Activated T-helper 1 cell treated with anti-CD3 and anti-CD28 coated beads, Interleukin-12 subunit alpha, Interleukin-12 subunit beta, Interleukin-2, Interleukin-4 antibody, amounts not matched to agents 30 ng/mL and 10 ng/mL and 1 ng/mL, durations not matched to agents 14 hours and 24 hours and 36 hours (primary cell): ENCODE measurements at regions of chr11 and their contacts with region 1.

Region 1: GRCh38 chr11:62383822-62384221 is 35.0 kb upstream of the SCGB1A1 start:
- DNase-seq: no peak
- H3K4me3 Mint-ChIP-seq: no peak overlapping the region
- H3K27ac Mint-ChIP-seq: no peak overlapping the region
- H3K4me1 Mint-ChIP-seq: peaks cover 19% of the 10 kb centered on the region
- H3K27me3 Mint-ChIP-seq: peaks cover 10% of the 10 kb centered on the region

Region 2: GRCh38 chr11:61695917-61696316 is 687.9 kb before region 1 on chr11:
- intact Hi-C with region 1: no loop called
- DNase-seq: peak; percentile 90
- H3K4me3 Mint-ChIP-seq: peak overlapping the region; percentile 70
- H3K27ac Mint-ChIP-seq: peak overlapping the region; percentile 82
- H3K4me1 Mint-ChIP-seq: peaks cover 25% of the 10 kb centered on the region
- H3K27me3 Mint-ChIP-seq: peaks cover 3% of the 10 kb centered on the region

Region 3: DNA sequence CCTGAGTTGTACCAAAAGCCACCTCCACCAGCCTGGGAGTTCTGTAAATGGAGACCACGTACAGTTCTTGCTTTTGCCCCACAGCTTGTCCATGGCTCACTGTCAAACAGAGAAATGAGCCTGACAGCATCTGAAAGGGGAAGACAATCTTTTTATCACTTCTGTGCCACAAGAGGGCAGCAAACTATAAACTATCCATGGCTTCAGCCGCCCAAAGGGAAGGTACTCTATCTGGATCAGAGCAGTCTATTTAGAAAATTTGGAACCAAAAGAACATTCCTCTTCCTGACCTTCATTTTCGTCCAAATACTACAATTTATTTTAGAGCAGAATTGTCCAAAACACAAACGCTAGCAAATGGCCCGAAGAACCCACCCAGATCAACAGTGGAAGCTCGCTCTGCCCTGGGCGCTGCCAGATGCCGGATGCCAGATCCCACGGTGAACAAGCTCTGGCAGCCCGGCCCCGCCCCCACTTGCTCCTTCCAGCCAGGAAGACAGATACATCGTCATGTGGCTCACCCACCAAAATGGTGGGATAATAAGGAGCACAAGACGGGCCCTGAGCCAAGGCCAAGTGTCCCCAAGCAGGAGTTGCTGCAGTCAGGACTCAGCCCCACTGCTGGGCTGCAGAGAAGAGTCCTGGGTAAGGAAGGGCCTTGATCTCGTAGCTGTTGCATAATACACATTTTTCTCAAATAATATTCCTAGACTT is 11.2 kb after region 1 on chr11:
- intact Hi-C with region 1: loop called (anchors 1 kb)
- DNase-seq: peak; percentile 48
- H3K4me3 Mint-ChIP-seq: no peak overlapping the region
- H3K27ac Mint-ChIP-seq: no peak overlapping the region
- H3K4me1 Mint-ChIP-seq: peaks cover 8% of the 10 kb centered on the region
- H3K27me3 Mint-ChIP-seq: peaks cover 2% of the 10 kb centered on the region

Region 4: DNA sequence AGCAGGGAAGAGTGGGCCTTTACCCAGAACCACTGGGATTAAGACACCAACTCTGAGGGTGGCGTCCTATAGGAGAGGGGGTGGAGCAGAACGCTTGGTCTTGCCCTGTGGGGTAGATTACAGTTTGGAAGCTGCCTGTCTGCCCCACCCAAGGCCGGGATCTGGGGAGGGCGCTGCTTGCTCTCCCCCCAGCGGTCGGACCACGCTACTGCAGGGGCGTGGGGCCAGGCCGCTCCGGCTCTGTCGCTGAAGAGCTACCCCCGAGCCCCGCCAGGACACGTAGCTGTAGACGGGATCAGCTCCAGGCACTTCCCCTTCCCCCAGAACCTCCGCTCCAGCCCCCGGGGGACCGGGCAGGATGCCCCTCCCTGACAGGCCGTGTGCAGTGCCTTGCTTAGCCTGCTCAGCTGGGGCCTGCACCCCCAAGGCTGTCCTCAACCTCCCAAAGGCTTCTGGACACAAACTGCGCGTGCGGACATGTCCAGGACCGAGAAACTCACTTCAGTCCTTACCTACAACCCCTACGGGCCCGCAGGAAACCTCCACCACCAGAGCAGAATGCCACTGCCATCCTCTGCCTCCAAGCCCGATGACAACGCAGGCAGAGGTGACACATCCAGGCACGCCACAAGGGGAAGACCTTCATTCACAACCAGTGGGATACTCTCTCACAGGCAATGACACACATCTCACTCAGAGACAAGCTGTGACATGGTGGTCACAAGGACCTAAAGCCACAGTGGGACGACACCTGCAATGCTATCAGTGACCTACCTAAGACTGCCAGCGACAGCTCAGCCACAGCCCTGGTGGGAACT is 159.1 kb after region 1 on chr11:
- intact Hi-C with region 1: loop called (anchors 1 kb)
- DNase-seq: peak; percentile 69
- H3K4me3 Mint-ChIP-seq: peak overlapping the region; percentile 97
- H3K27ac Mint-ChIP-seq: peak overlapping the region; percentile 95
- H3K4me1 Mint-ChIP-seq: peaks cover 75% of the 10 kb centered on the region
- H3K27me3 Mint-ChIP-seq: peaks cover 3% of the 10 kb centered on the region

Region 5: GRCh38 chr11:62694455-62695167 is 310.8 kb after region 1 on chr11:
- intact Hi-C with region 1: loop called (anchors 1 kb)
- DNase-seq: peak; percentile 61
- H3K4me3 Mint-ChIP-seq: no peak overlapping the region
- H3K27ac Mint-ChIP-seq: peak overlapping the region; percentile 71
- H3K4me1 Mint-ChIP-seq: peaks cover 8% of the 10 kb centered on the region
- H3K27me3 Mint-ChIP-seq: no peaks in the 10 kb centered on the region

Region 6: DNA sequence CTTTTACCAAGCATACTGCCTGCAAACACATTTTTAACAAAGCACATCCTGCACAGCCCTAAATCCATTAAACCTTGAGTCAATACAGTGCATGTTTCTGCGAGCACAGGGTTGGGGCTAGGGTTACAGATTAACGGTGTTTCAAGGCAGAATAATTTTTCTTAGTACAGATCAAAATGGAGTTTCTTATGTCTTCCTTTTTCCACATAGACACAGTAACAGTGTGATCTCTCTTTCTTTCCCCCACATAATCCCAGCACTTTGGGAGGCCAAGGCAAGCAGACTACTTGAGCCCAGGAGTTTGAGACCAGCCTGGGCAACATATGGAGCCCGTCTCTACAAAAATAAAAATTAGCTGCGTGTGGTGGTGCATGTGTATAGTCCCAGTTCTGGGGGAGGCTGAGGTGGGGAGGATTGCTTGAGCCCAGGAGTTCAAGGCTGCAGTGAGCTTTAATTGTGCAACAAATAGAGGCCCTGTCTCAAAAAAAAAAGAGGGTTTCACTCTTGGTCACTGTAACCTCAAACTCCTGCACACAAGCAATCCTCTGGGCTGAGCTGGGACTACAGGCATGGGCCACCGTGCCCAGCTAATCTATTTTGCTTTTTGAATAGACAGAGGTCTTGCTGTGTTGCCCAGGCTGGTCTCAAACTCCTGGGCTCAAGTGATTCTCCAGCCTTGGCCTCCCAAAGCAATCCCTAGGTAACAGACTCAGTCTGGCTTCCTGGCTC is 477.2 kb after region 1 on chr11:
- intact Hi-C with region 1: loop called (anchors 10 kb)
- DNase-seq: no peak
- H3K4me3 Mint-ChIP-seq: no peak overlapping the region
- H3K27ac Mint-ChIP-seq: no peak overlapping the region
- H3K4me1 Mint-ChIP-seq: peaks cover 65% of the 10 kb centered on the region
- H3K27me3 Mint-ChIP-seq: no peaks in the 10 kb centered on the region